Ascending aorta (tissue), 2 donors: ENCODE measurements at regions of chr16 and their contacts with region 1.

Region 1: DNA sequence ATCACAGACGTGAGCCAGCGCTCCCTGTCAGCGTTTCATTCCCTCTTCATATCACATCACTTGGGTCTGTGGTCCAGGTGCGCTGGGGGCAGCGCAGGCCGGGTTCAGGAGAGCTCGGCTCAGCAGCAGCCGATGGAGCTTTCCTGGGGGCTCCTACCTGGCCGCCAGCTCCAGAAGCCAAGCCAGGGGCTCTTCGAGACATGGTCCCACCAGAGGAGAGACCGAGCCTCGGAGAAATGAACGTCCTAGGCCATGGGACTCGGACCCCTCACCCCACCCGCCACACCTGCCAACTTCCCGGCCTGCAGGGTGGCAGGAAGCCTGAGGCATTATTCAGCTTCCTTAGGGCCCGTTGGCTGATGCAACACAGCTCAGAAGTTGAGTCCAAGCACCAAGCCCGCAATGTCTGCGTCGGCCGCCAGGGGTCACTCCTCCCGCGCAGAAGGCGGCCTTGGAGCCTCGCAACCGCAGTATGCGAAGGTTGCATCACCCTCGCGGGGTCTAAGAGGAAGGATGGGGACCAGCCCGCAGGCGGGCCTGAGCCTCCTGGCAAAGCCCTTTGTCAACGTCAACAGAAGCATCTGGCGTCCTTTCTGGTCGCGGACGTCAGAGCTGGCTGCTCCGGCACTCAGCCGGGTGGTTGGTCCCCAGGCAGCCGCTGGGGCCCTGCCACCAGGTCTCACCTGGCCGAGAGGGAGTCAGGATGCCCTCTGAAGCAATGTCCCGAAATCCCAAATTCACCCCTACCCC is 13.2 kb upstream of the KLHDC4 start:
- DNase-seq: peak; percentile 76 to 95
- H3K4me3 ChIP-seq: no peak overlapping the region
- H3K27ac ChIP-seq: no peak overlapping the region
- H3K4me1 ChIP-seq: peaks cover 0 to 8% of the 10 kb centered on the region in 2 donors
- H3K27me3 ChIP-seq: no peaks in the 10 kb centered on the region
- CTCF ChIP-seq: peak; percentile 94 to 99 (median 96)

Region 2: GRCh38 chr16:87765776-87766484 is 13.1 kb before region 1 on chr16 and contains the start of gene KLHDC4:
- intact Hi-C with region 1: no loop called
- DNase-seq: peak; percentile 57 to 94
- H3K4me3 ChIP-seq: peak within 1 kb of the TSS; percentile 72 to 81
- H3K27ac ChIP-seq: peak within 1 kb of the TSS; percentile 81 to 86
- H3K4me1 ChIP-seq: peaks cover 8 to 9% of the 10 kb centered on the region in 2 donors
- H3K27me3 ChIP-seq: no peaks in the 10 kb centered on the region
- CTCF ChIP-seq: no peak
- total RNA-seq, gene KLHDC4: 38.4 TPM

Region 3: DNA sequence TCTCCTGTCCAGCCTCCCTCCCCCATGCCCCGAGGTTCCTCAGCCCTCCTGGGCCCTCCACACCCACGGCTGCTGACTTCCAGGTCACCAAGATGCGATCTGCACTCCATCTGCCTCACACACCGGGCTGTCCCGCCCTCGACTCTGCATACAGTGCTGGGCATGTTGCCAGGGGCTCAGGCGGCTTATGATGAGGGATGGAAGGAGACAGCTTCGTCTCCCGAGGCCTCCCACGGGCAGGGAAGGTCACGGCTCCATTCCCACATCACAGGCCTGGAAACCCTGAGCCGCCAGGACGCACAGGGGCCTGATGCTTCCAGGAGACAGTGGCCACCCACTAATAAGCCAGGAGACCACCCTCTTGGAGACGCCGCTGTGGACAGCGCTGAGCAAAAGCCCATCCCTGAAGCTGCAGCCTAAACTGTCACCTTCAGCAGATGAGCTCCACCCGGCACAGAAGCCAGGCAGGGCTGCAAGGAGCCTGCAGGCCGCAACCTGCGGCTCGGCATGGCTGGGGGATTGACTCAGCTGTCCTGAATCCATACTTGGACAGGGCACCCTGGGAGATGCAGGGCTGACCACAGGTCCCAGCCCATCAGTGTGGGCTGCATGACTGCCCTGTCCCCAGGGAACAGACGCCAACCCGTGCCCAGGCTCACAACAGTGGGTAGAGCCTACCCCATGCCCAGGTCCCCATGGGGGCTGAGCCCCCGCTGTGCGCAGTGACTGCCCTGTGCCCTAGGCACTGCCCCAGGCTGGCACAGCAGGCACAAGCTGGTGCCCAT is 55.8 kb after region 1 on chr16:
- intact Hi-C with region 1: loop called (anchors 5 kb)
- DNase-seq: no peak
- H3K4me3 ChIP-seq: no peak overlapping the region
- H3K27ac ChIP-seq: no peak overlapping the region
- H3K4me1 ChIP-seq: no peaks in the 10 kb centered on the region
- H3K27me3 ChIP-seq: no peaks in the 10 kb centered on the region
- CTCF ChIP-seq: no peak

Region 4: DNA sequence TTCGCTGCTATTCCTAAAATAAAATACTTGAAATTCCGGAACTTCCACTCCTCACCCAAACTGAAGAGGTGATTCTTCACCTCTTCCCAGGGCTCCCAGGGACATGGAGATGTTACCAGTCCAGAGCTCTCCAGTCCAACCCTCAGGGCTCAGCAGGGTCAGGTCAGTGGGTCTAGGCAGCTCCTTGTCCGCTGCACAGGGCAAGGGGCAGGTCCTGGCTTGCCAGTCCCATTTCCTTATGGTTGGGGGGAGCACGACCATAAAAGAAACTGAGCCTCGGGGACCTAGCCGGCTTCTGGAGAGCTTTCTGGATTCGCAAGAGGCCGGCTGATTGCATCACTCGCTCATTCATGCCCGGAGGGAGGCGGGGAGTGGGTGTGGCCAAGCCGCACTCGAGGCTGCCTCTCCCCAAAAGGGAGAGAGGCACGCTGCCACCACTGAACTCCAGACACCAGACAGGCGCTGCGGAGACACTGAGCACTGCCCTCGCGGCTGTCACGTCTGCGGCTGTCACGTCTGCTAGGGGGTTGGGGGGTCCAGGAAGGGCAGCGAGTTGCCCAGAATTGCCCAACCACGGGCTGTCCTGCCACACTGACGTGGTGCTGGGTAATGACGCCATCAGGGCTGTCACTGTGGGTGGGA is 74.5 kb after region 1 on chr16:
- intact Hi-C with region 1: loop called (anchors 2 kb)
- DNase-seq: peak; percentile 94 to 98
- H3K4me3 ChIP-seq: peak overlapping the region; percentile 41 to 61
- H3K27ac ChIP-seq: peak overlapping the region; percentile 73 to 78
- H3K4me1 ChIP-seq: peaks cover 9 to 22% of the 10 kb centered on the region in 2 donors
- H3K27me3 ChIP-seq: no peaks in the 10 kb centered on the region
- CTCF ChIP-seq: no peak

Region 5: DNA sequence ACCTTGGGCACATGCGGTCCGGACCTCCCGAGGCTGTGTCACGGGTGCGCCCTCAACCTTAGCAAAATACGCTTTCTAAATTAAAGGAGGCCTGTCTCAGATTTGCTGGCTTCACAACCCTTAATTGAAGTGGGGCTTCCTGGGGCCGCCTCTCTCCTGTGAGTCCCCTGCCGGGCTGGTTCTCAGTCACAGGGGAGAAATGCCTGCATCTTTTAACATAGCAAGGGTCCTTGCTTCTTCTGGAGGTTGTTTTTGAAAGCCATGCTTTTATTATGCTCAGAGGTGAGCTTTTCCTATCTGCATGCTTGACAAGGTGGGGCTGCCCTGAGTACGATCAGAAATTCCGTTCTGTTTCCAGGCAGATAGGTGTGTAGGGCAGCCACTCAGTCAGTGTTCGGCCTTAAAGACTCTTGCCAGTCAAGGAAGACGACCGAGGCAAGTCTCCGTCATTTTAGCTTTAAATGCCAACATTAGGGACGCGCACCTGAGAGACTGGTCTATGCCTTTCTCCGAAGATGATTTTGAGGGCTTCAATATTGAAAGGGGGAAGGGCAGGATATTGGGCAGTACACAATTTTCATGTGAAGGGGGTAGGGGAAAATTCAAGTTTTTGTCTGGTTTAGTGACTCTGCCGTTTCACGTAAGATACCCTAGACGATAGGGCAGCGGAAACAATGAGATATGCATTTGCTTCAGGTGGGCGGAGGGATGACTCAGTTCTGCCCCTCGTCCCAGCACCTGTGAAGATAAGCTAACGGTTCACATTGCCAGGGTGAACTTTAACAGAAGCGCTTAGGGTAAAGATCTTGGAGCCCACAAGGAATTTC is 95.8 kb after region 1 on chr16:
- intact Hi-C with region 1: loop called (anchors 1 kb)
- DNase-seq: no peak
- H3K4me3 ChIP-seq: no peak overlapping the region
- H3K27ac ChIP-seq: no peak overlapping the region
- H3K4me1 ChIP-seq: no peaks in the 10 kb centered on the region
- H3K27me3 ChIP-seq: no peaks in the 10 kb centered on the region
- CTCF ChIP-seq: no peak